ENCODE measurements at regions of chr1 and their contacts with region 1.

Region 1: DNA sequence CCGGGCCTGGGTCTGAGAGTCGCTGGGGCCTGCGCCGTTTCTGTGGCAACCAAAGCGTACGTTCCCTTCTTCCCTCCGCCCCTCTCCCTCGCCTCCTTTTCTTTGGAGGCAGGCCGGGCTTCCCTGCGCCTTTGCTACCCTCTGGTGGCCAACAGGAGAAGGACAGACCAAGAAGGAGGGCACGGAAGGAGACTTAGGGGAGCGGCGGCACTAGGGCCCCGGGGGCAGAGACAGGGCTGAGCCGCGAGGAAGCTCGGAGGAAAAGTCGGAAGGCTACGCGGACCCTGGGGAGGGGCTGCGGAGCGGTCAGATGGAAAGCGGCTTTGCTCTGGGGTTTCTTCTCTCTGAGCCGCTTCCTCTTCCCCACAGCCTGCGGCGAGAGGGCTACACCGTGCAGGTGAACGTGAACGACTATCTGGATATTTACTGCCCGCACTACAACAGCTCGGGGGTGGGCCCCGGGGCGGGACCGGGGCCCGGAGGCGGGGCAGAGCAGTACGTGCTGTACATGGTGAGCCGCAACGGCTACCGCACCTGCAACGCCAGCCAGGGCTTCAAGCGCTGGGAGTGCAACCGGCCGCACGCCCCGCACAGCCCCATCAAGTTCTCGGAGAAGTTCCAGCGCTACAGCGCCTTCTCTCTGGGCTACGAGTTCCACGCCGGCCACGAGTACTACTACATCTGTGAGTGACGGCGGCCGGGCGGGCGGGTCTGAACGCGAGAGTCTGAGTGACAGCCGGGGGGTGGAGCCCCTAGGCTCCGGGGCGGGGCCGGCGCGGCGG is 6.3 kb downstream of the EFNA3 start:
- DNase-seq: peak; percentile 97
- ATAC-seq: peak; percentile 78
- H3K4me3 Mint-ChIP-seq: peak overlapping the region; percentile 91
- H3K27ac Mint-ChIP-seq: peak overlapping the region; percentile 94
- H3K4me1 Mint-ChIP-seq: peaks cover 26% of the 10 kb centered on the region
- H3K27me3 Mint-ChIP-seq: peaks cover 35% of the 10 kb centered on the region
- CTCF ChIP-seq: peak; percentile 89

Region 2: DNA sequence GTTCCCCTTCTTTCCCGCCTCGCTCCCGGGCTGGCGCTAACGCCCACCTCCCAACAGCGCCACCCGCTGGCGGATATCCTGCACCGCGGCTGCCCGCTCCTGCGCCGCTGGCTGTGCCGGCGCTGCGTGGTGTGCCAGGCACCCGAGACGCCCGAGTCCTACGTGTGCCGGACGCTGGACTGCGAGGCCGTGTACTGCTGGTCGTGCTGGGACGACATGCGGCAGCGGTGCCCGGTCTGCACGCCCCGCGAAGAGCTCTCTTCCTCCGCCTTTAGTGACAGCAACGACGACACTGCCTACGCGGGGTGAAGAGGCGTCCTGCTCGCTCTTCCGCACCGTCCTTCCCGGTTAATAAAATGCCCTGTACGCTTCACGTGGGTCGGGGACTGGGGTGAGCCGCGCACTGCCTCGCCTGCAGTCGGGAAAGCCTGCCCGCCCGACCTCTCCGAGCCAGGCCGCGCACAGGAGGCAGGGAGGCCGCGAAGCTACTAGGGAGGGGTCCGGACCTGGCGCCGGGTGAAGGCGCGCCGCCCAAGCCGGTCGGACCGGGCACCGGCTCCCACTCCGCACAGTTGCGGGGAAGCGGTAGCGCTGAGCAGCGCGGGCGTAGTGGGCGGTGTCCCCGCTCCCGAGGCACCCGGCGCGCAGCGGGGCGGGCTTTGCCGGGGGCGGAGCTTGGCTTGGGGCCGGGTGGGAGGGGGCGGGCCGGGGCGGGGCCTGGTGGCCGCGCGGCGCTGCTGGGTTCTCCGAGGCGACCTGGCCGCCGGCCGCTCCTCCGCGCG is 34.2 kb before region 1 on chr1 and contains the start of gene ADAM15:
- CTCF ChIA-PET with region 1: interaction called, 278 read pairs
- POLR2A ChIA-PET with region 1: interaction called, 7 read pairs
- intact Hi-C with region 1: loop called (anchors 5 kb)
- DNase-seq: peak; percentile 80
- ATAC-seq: peak; percentile 79
- H3K4me3 Mint-ChIP-seq: peak within 1 kb of the TSS; percentile 88
- H3K27ac Mint-ChIP-seq: peak within 1 kb of the TSS; percentile 60
- H3K4me1 Mint-ChIP-seq: peaks cover 20% of the 10 kb centered on the region
- H3K27me3 Mint-ChIP-seq: no peaks in the 10 kb centered on the region
- CTCF ChIP-seq: peak; percentile 99
- total RNA-seq, gene ADAM15: 36.4 to 37.2 TPM

Region 3: DNA sequence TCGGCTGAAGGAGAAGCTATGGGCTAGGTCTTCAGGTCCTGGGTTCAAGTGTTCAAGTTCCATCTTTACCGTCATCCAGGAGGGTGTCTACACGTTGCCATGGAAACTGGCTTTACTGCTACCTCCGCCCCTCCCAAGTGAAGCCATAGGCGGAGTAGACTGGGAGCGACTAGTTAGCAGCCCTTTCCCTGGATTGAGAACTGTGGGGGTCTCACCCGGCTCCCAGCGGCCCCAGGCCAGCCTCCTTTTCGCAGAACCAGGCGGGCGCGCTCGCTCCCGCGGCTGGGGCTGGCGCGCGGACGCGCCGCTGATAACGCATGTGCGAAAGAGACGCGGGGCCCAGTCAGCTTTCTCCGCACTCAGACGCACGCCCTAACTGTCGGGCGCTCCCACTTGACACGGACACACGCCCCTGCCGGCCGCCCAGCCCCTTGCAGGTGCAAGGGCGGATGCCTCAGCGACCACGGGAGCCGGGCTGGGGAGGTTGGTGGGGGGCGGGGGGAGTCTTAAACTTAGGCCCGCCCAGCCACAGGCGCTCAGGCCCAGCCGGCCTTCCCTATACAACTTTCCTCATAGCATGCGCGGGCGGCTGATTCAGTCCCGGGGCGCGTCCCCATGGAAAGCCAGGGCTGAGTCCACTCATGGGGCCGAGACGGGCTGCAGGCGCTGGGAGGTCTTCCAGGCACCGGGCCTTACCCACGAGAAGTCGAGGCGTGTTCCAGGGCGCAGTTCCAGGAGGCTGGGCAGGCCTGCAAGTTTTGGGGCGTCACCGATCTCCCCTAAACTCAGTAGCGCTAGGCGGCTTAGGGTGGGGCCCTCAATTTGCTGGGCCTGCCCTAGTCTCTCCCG is 14.0 kb before region 1 on chr1:
- CTCF ChIA-PET with region 1: interaction called, 278 read pairs
- POLR2A ChIA-PET with region 1: interaction called, 7 read pairs
- intact Hi-C with region 1: no loop called
- DNase-seq: peak; percentile 90
- ATAC-seq: peak; percentile 94
- H3K4me3 Mint-ChIP-seq: peak overlapping the region; percentile 56
- H3K27ac Mint-ChIP-seq: no peak overlapping the region
- H3K4me1 Mint-ChIP-seq: peaks cover 21% of the 10 kb centered on the region
- H3K27me3 Mint-ChIP-seq: no peaks in the 10 kb centered on the region
- CTCF ChIP-seq: peak; percentile 64

Region 4: DNA sequence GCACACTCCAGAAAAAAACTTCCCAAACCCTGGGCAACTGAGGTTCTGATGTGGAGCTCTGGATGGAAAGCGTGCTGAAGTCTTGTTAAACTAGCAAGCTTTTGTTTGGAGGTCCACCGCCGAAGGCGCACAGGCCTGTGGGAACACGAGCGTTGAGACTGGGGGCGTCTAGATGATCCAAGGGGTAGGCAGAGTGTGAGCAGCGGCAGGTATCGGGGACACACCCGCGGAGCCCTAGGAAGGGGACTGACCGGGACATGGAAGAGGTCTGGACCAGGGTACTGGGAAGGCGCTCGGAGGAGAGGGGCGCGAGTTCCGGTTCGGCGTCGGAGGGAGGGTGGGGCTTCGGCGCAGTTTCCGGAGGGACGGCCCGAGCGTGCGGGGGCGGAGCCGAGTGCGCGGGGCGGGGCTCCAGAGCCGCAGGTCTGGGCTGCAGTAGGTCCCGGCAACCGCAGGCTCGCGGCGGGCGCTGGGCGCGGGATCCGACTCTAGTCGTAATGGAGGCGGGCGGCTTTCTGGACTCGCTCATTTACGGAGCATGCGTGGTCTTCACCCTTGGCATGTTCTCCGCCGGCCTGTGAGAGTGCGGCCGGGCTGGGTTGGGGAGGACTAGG is 50.6 kb after region 1 on chr1 and contains the start of gene SLC50A1:
- CTCF ChIA-PET with region 1: interaction called, 10 read pairs
- POLR2A ChIA-PET with region 1: interaction called, 6 read pairs
- intact Hi-C with region 1: no loop called
- DNase-seq: peak; percentile 96
- ATAC-seq: peak; percentile 80
- H3K4me3 Mint-ChIP-seq: peak within 1 kb of the TSS; percentile 99
- H3K27ac Mint-ChIP-seq: peak within 1 kb of the TSS; percentile 99
- H3K4me1 Mint-ChIP-seq: peaks cover 33% of the 10 kb centered on the region
- H3K27me3 Mint-ChIP-seq: no peaks in the 10 kb centered on the region
- CTCF ChIP-seq: no peak
- total RNA-seq, gene SLC50A1: 59.7 to 64.0 TPM

Region 5: DNA sequence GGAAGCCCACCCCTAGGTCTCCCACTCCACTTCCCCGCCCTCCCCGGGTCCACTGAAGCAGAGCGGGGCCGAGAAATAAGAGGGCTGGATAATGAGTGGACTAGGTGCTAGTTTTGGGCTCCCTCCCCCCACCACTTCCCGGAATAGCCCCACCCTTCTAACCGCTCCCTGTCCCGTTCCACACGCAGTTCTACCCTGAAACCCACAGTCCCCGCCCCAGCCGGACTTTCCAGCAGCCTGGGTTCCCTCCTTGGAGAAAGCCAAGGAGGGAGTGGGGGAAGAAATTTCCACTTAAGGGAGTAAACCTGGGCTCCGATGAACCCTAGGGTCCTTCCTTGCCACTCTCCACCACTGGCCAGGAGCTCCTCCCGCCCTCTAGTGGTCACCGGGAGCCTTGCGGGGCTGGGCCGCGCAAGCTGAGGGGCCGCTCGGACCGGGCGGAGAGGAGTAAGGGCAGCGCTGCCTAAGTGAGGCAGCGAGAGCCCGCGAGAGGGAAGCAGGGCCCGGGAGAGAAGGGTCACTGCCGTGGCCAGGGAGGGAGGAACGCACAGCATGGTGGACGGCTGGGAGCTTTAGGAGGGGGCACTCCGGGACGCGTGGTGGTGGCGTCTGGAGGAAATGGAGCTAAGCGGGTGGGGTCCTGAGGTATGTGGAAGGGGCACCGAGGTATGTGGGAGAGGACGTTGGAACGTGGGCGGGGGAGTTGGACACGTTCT is 108.5 kb after region 1 on chr1:
- CTCF ChIA-PET with region 1: interaction called, 12 read pairs
- POLR2A ChIA-PET with region 1: no interaction called
- intact Hi-C with region 1: no loop called
- DNase-seq: peak; percentile 84
- ATAC-seq: peak; percentile 62
- H3K4me3 Mint-ChIP-seq: peak overlapping the region; percentile 90
- H3K27ac Mint-ChIP-seq: peak overlapping the region; percentile 99
- H3K4me1 Mint-ChIP-seq: peaks cover 28% of the 10 kb centered on the region
- H3K27me3 Mint-ChIP-seq: no peaks in the 10 kb centered on the region
- CTCF ChIP-seq: peak; percentile 98